AG04449 (cell line): ENCODE measurements at regions of chr9 and their contacts with region 1.

Region 1: DNA sequence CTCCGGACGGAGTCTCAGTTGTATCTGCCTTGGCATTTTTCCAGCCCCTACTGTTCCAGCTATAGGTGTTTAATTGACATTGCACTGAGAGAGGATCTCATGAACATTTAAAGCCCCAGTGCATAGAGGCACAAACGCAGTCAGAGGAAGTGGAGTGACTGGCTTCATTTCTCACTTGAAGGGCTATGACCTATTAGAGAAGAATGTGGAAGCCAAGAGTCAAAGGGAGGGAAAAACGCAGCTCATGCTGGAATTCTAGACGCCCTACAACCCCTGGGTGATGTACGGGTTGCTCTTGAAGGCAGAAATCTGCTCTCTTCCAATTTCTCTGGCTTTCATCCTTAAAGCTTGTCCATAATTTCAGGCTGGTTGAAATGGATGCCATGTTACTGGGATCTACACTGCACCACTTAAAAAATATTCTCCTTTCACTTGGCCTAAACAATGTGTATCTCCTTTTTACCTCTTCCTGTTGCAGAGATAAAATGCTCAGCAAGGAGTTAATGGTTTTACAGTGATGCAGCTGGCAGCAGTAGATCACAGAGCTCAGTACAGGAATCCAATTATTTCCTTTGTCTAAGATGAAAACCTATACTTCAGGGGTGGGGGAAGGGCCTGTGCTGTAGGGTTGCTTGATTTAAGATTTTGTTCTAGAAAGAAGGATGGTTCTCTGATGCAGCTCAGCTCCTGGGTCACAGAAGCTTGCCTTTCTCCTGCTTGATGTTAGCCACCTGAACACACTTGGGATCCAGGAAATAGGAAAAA is 61.8 kb upstream of the MAMDC2 start:
- DNase-seq: no peak
- H3K4me3 ChIP-seq: no peak overlapping the region
- CTCF ChIP-seq: no peak

Region 2: GRCh38 chr9:69945671-69946141 is 36.2 kb before region 1 on chr9:
- CTCF ChIA-PET with region 1: no interaction called
- POLR2A ChIA-PET with region 1: no interaction called
- DNase-seq: no peak
- H3K4me3 ChIP-seq: no peak overlapping the region
- CTCF ChIP-seq: no peak

Region 3: GRCh38 chr9:69971643-69972449 is 10.0 kb before region 1 on chr9:
- CTCF ChIA-PET with region 1: interaction called, 14 read pairs
- POLR2A ChIA-PET with region 1: interaction called, 7 read pairs
- DNase-seq: no peak
- H3K4me3 ChIP-seq: no peak overlapping the region
- CTCF ChIP-seq: peak; percentile 84

Region 4: GRCh38 chr9:70085241-70085640 is 103.4 kb after region 1 on chr9:
- CTCF ChIA-PET with region 1: no interaction called
- POLR2A ChIA-PET with region 1: no interaction called
- DNase-seq: no peak
- H3K4me3 ChIP-seq: no peak overlapping the region
- CTCF ChIP-seq: no peak